ENCODE measurements at regions of chr11 and their contacts with region 1.

Region 1: GRCh38 chr11:123103326-123103980 is 41.5 kb upstream of the HSPA8 start:
- DNase-seq: peak; percentile 98
- H3K4me3 ChIP-seq: no peak overlapping the region
- H3K27ac ChIP-seq: peak overlapping the region; percentile 50
- H3K4me1 ChIP-seq: peaks cover 57% of the 10 kb centered on the region
- H3K27me3 ChIP-seq: no peaks in the 10 kb centered on the region
- CTCF ChIP-seq: peak; percentile 93

Region 2: DNA sequence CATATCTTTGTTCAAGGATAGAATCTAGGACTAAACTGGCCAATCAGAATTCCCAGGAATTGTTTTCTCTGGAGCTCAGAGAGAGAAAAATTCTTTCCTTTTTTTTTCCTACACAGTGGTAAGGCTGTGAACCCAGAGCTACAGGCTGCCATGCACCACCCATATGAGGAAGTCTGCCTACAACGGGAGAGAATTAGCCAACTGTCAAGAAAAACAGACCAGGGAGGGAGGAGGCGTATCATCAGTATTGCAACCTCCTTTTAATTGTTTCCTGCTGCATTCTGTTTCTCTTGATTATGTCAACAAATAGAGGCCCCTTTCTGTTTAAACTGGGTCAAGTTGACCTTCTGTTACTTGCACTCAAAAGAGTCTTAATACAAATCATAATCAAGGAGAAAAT is 624.5 kb before region 1 on chr11:
- CTCF ChIA-PET with region 1: no interaction called
- POLR2A ChIA-PET with region 1: interaction called, 14 read pairs
- intact Hi-C with region 1: no loop called
- DNase-seq: no peak
- H3K4me3 ChIP-seq: no peak overlapping the region
- H3K27ac ChIP-seq: no peak overlapping the region
- H3K4me1 ChIP-seq: no peaks in the 10 kb centered on the region
- H3K27me3 ChIP-seq: no peaks in the 10 kb centered on the region
- CTCF ChIP-seq: no peak

Region 3: DNA sequence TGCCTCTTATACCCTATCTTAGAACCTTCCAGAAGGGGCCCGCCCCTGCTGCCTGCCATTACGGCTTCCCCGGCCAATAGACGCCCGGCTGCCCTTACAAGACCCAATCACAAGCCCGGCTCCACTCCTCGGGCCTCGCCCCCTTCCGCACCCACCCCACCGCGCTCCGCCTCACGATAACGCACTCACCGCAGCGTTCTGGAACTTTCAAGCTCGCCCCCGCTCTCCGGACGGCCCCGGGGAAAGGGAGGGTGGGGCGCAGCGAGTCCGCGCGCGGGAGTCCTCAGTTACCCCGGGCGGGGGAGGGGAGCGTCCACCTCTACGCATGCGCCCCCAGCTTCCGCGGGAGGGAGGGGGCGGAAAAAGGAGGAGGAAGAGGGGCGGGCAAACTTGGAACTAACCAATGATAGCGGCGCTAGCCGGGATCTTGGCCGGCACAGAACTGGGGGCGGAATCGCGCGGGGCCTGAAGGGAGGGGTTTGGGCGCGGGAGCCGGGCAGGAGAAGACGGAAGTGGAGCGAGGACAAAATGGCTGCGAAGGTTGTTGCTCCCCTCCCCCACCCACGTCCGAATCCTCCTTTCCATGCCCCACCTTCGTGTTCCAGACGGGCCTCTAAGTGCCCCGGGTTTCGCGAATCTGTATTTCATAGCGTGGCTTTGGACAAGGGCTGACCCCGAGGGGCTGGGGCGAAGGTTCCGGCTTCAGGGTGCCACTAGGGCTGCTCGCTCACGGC is 41.1 kb before region 1 on chr11:
- CTCF ChIA-PET with region 1: interaction called, 4 read pairs
- POLR2A ChIA-PET with region 1: interaction called, 13 read pairs
- intact Hi-C with region 1: no loop called
- DNase-seq: peak; percentile 100
- H3K4me3 ChIP-seq: peak overlapping the region; percentile 83
- H3K27ac ChIP-seq: peak overlapping the region; percentile 100
- H3K4me1 ChIP-seq: peaks cover 52% of the 10 kb centered on the region
- H3K27me3 ChIP-seq: no peaks in the 10 kb centered on the region
- CTCF ChIP-seq: no peak

Region 4: GRCh38 chr11:123194337-123195187 is 91.1 kb after region 1 on chr11:
- CTCF ChIA-PET with region 1: no interaction called
- POLR2A ChIA-PET with region 1: no interaction called
- intact Hi-C with region 1: no loop called
- DNase-seq: peak; percentile 56
- H3K4me3 ChIP-seq: peak overlapping the region; percentile 53
- H3K27ac ChIP-seq: peak overlapping the region; percentile 81
- H3K4me1 ChIP-seq: peaks cover 37% of the 10 kb centered on the region
- H3K27me3 ChIP-seq: no peaks in the 10 kb centered on the region
- CTCF ChIP-seq: no peak

Region 5: DNA sequence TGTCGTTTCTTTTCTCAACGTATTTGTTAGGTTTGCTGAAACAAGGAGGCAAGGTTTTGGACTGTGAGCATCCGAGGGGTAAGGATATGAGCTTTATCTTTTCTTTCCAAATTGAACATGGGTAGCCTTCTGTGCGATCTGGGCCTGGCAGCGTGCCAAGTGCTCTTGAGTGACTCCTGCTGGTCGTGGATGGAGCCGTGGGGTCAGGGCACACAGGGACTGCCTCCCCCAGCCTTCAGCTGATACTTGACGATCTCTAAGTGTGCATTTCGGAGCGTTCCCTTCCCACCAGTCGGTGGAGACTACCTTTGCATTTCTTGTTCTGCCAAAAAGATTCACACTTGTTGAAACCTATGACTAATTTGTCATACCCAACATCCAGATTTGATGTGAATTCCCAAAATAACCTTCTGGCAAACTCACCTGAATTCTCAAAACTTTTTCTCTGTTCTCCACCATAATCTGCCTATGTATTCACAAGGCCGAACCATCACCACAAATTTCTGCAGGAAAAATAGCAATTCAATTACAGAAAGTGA is 131.7 kb after region 1 on chr11:
- CTCF ChIA-PET with region 1: interaction called, 10 read pairs
- POLR2A ChIA-PET with region 1: no interaction called
- intact Hi-C with region 1: no loop called
- DNase-seq: peak; percentile 77
- H3K4me3 ChIP-seq: no peak overlapping the region
- H3K27ac ChIP-seq: no peak overlapping the region
- H3K4me1 ChIP-seq: peaks cover 15% of the 10 kb centered on the region
- H3K27me3 ChIP-seq: no peaks in the 10 kb centered on the region
- CTCF ChIP-seq: peak; percentile 79

Region 6: GRCh38 chr11:123246749-123247495 is 143.5 kb after region 1 on chr11:
- CTCF ChIA-PET with region 1: interaction called, 61 read pairs
- POLR2A ChIA-PET with region 1: no interaction called
- intact Hi-C with region 1: loop called (anchors 2 kb)
- DNase-seq: peak; percentile 93
- H3K4me3 ChIP-seq: no peak overlapping the region
- H3K27ac ChIP-seq: no peak overlapping the region
- H3K4me1 ChIP-seq: peaks cover 45% of the 10 kb centered on the region
- H3K27me3 ChIP-seq: no peaks in the 10 kb centered on the region
- CTCF ChIP-seq: peak; percentile 100

Region 7: GRCh38 chr11:123261345-123262106 is 158.1 kb after region 1 on chr11:
- CTCF ChIA-PET with region 1: interaction called, 40 read pairs
- POLR2A ChIA-PET with region 1: no interaction called
- intact Hi-C with region 1: loop called (anchors 5 kb)
- DNase-seq: peak; percentile 95
- H3K4me3 ChIP-seq: no peak overlapping the region
- H3K27ac ChIP-seq: no peak overlapping the region
- H3K4me1 ChIP-seq: peaks cover 17% of the 10 kb centered on the region
- H3K27me3 ChIP-seq: no peaks in the 10 kb centered on the region
- CTCF ChIP-seq: peak; percentile 99

Region 8: DNA sequence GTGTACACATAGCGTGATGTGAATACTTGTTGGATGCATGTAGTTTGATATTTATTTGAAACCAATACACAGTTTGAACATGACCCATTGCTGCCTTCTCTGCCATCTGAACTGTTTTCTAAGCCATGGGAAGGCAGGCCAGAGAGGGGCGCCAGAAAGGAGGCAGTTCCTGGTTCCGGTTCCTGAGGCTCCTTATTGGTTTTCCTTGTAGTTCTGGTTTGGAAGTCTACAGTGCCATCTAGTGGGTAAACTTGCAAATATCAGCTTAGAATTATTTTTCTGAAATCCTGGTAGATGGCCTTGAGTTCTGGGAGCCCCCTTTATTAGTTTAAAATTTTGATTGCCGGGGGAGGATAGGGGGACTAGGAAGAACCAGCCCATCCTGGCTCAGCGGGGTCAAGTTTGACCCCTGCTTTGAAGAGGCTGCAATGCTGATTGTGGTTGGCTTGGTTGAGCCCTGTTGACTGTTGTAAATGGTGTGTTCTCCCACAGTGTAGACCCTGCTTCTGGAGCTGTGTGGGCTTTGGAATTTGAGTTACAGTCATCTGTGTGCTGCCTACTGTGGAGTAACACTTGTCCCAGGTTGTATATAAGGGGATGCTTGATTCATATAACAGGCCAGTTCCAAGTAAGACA is 375.0 kb after region 1 on chr11:
- CTCF ChIA-PET with region 1: interaction called, 6 read pairs
- POLR2A ChIA-PET with region 1: no interaction called
- intact Hi-C with region 1: loop called (anchors 2 kb)
- DNase-seq: peak; percentile 93
- H3K4me3 ChIP-seq: no peak overlapping the region
- H3K27ac ChIP-seq: no peak overlapping the region
- H3K4me1 ChIP-seq: peaks cover 28% of the 10 kb centered on the region
- H3K27me3 ChIP-seq: no peaks in the 10 kb centered on the region
- CTCF ChIP-seq: peak; percentile 85